Caco-2 (cell line): ENCODE measurements at regions of chr3 and their contacts with region 1.

Region 1: DNA sequence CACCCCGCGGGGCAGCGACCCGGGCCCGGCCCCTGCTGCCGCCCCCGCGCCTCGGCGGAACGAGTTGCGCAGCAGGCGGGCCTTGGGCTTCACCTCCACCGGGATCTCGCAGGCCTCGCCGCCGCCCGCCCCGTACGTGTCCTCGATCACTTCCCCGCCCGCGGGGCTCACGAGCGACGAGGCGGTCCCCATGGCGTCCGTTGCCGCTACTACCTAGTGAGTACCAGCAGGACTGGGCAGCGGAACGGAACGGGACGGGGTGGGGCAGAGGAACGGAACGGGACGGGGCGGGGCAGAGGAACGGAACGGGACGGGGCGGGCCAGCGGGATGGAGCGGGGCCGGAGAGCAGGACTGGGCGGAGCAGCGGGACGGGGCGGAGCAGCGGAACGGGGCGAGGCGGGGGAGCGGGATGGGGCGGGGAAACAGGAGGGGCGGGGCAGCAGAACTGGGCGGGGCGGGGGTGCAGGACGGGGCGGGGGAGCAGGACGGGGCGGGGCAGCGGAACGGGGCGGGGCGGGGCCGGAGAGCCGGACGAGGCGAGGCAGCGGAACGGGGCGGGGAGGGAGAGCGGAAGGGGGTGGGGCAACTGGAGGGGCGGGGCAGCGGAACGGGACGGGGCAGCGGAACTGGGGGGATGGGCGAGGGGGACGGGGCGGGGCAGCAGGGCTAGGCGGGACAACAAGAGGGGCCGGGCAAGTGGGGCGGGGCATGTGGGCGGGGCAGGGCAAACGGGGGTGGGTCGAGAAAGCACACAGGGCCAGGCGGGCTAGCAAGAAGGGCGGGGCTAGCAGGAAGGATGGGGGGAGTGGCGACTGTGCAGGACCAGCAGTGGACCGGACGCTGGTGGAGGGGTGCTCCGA is at the start of gene NPHP3:
- DNase-seq: peak; percentile 92 to 98
- H3K4me3 ChIP-seq: peak within 1 kb of the TSS; percentile 97
- H3K4me3 Mint-ChIP-seq: peak within 1 kb of the TSS; percentile 87
- H3K27ac Mint-ChIP-seq: peak within 1 kb of the TSS; percentile 88
- H3K4me1 ChIP-seq: peaks cover 9% of the 10 kb centered on the region
- H3K4me1 Mint-ChIP-seq: peaks cover 16% of the 10 kb centered on the region
- H3K27me3 ChIP-seq: no peaks in the 10 kb centered on the region
- H3K27me3 Mint-ChIP-seq: no peaks in the 10 kb centered on the region
- CTCF ChIP-seq: no peak
- total RNA-seq, gene NPHP3: 16.0 and 16.9 TPM in 2 replicates

Region 2: DNA sequence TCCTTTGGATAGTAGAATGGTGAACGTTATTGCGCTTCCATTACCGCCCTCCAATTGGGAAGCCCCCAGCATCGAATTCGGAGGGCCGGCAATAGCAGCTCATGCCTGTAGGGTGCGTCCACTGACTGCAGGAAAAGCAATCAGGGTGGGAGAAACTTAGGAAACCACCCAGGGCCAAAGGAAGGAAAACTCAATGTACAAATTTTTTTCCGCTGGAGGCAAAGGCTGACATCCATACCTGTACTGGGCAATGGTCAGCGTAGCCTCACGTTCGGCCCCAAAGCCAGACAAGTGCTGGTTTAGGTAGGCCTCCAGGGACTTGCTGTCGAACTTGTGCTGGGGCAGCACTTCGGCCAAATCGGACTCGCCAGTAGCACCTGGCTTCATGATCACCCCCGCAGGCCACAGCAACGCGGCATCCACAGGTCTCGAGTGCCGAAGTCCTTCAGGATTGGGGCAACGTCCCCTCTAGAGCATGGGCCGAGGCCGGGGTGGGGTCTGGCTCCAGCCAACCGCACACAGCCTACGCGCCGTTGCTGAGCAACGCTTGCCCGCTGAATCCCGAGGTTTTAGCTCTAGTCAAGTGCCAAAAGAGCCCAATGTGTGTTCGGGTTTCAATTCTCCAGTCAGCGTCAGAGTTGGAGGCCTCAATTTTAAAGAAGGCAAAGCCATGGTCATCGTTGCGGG is 62.9 kb before region 1 on chr3 and contains the start of gene ACAD11:
- CTCF ChIA-PET with region 1: no interaction called
- POLR2A ChIA-PET with region 1: no interaction called
- intact Hi-C with region 1: loop called (anchors 1 kb)
- DNase-seq: peak; percentile 67 to 73
- H3K4me3 ChIP-seq: peak within 1 kb of the TSS; percentile 97
- H3K4me3 Mint-ChIP-seq: peak within 1 kb of the TSS; percentile 97
- H3K27ac Mint-ChIP-seq: peak within 1 kb of the TSS; percentile 99
- H3K4me1 ChIP-seq: peaks cover 31% of the 10 kb centered on the region
- H3K4me1 Mint-ChIP-seq: peaks cover 30% of the 10 kb centered on the region
- H3K27me3 ChIP-seq: no peaks in the 10 kb centered on the region
- H3K27me3 Mint-ChIP-seq: no peaks in the 10 kb centered on the region
- CTCF ChIP-seq: peak; percentile 58 to 74
- total RNA-seq, gene ACAD11: 25.8 and 33.0 TPM in 2 replicates

Region 3: GRCh38 chr3:132773071-132773619 is 50.8 kb after region 1 on chr3:
- CTCF ChIA-PET with region 1: no interaction called
- POLR2A ChIA-PET with region 1: no interaction called
- intact Hi-C with region 1: no loop called
- DNase-seq: no peak
- H3K4me3 ChIP-seq: no peak overlapping the region
- H3K4me3 Mint-ChIP-seq: no peak overlapping the region
- H3K27ac Mint-ChIP-seq: no peak overlapping the region
- H3K4me1 ChIP-seq: no peaks in the 10 kb centered on the region
- H3K4me1 Mint-ChIP-seq: no peaks in the 10 kb centered on the region
- H3K27me3 ChIP-seq: no peaks in the 10 kb centered on the region
- H3K27me3 Mint-ChIP-seq: peaks cover 10% of the 10 kb centered on the region
- CTCF ChIP-seq: no peak